Posterior cingulate gyrus (tissue), 11 donors: ENCODE measurements at regions of chr5 and their contacts with region 1.

Region 1: DNA sequence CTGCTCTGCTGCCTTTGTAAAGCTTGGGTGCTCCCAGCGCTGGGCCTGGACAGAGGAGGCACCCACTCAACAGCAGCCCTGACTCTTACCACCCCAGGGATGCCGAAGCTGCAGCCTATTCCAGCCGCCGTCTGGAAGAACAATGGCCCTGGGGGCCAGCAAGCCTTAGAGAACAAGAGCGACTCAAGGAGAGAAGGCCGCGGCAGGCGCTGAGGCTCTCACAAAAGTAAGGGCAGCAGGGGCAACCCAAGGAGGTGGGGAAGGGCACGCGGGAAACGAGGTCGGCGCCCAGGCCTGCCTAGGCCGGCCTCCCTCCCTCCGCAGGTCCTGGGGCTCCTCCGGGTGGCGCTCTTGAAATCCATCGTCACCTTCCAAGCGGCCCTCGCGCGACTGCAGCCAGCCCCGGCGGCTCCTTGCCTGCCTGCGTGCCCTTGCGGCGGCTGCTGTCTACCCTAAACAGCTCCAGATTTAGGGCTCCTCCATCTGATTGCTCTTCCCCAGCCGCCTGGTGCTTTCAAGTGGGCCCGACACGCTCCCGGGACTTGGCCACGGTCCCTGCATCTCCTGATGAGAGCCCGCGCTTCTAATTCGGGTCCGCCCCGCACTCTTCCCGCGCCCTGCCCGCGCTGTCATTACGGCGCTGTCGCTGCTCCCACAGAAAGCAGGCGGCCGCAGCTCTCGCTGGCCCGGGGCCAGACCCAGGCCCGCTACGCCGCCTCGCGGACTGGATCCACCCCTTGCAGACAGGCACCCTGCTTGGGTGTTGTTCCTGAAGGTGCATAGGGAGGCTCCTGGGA is 213.3 kb downstream of the SEMA6A start:
- DNase-seq: peak; percentile 61 to 96 (median 76)

Region 2: DNA sequence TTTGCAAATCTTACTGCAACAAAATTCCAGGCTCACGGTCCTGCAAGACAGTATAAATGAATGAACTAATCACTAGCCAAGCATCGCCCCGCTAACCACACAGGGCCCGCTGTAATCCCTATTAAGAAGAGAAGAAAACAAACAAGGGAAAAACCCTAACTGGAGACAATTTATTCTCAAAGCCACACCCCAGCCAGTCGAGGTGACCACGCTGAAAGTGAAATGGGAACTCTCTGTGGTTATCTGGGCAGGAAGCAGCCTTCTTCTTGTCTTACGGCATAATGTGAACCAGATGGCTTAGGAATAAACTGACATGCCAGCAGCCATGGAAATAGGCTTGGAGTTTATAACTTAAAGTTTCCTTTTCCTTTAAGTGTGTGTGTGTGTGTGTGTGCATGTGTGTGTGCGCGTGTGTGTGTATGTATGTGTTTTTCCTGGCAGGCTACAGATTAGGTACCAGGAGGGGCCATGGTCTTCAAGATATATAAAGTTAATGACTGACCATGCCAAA is 93.1 kb after region 1 on chr5:
- intact Hi-C with region 1: loop called (anchors 10 kb)
- DNase-seq: no peak

Region 3: DNA sequence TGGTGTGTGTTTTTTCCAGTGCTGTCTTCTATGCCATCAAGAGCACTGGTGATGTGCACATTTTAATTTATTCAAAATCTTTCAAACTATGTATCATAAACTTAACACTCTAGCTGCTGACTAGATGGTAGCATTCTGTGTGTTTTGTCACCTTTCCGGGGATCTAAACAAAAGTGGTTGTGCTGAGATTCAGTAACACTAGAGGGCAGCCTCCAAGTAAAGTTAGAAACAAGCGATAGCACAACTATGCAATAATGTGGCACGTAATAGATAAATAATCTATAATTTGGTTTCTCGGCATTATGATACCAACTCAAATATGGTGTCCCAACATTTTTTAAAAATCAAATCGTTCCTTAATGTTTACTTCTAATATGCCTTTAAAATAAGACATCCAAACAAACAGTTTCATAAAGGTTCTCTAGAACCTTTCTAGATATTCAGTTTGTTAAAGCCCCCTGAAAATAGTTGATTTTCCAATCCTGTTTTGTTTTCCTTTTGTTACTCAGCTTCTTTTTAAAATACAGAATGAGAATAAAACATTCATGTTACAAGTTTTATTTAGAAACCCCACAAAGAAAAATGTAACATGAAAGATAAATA is 196.4 kb after region 1 on chr5:
- intact Hi-C with region 1: loop called (anchors 5 kb)
- DNase-seq: no peak